ENCODE measurements at regions of chr5 and their contacts with region 1.

Region 1: GRCh38 chr5:64207978-64208377 is 42.3 kb downstream of the RNF180 start:
- DNase-seq: no peak
- ATAC-seq: no peak
- H3K4me3 ChIP-seq: no peak overlapping the region
- H3K27ac ChIP-seq: no peak overlapping the region
- H3K4me1 ChIP-seq: no peaks in the 10 kb centered on the region
- H3K27me3 ChIP-seq: no peaks in the 10 kb centered on the region
- CTCF ChIP-seq: peak; percentile 41

Region 2: DNA sequence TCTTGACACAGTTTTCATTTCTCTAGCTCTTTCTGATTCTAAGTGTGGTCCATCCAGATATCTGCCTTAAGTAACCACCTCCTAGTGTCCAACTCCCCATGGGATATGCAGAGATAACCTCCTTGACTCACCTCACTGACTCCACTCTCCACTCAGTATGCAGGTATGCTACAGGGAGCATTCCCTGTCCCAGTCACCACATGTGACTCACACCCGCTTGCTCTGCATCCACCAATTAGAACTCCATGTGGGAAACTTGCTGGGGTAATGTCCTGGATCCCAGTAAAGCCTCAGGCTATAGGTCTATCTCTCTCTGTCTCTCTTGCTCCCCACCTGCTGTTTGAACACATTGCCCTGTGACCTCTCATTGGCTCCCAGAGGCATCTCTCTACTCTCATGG is 809.6 kb before region 1 on chr5:
- intact Hi-C with region 1: loop called in 1 of 2 experiments (anchors 10 kb)
- DNase-seq: no peak
- ATAC-seq: no peak
- H3K4me3 ChIP-seq: no peak overlapping the region
- H3K27ac ChIP-seq: no peak overlapping the region
- H3K4me1 ChIP-seq: no peaks in the 10 kb centered on the region
- H3K27me3 ChIP-seq: no peaks in the 10 kb centered on the region
- CTCF ChIP-seq: no peak

Region 3: GRCh38 chr5:64147849-64148441 is 60.0 kb before region 1 on chr5:
- intact Hi-C with region 1: loop called (anchors 2 to 5 kb)
- DNase-seq: peak; percentile 37 to 70
- ATAC-seq: peak in 3 of 4 donors; percentile 48 to 82 (median 49)
- H3K4me3 ChIP-seq: no peak overlapping the region
- H3K27ac ChIP-seq: no peak overlapping the region
- H3K4me1 ChIP-seq: peaks cover 17% of the 10 kb centered on the region
- H3K27me3 ChIP-seq: no peaks in the 10 kb centered on the region
- CTCF ChIP-seq: peak; percentile 78